ENCODE measurements at regions of chr14 and their contacts with region 1.

Region 1: DNA sequence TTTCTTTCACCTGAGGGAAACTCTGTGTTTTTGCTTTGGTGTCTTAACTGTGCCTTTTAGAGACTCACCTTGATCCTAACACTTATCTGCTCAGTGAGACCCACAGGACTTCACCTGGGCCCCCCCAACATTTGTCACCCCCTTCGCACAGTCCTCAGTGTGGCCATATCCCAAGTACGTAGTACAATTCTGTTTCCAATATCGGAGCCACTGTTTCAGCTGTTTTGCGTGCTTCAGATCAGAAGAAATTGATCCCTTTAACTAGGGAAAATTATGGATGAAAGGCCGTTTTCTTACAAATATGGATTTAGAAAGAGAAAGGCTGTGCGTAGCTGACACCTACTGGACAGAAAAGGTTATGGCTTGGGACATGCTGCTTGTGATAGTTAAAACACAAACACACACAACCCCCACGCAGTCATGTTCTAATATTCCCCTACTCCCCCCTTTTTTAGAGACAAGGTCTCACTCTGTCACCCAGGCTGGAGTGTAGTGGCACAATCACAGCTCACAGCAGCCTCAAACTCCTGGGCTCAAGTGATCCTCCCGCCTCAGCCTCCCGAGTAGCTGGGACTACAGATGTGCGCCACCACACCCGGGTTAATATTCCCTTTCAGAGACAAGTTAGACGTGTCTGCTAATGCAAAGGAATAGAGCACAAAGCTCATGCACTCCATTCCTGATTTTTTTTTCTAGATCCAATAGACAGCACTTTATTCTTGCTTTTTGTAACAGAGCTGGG is 3.6 kb upstream of the SLC7A8 start:
- DNase-seq: peak; percentile 51
- H3K4me3 Mint-ChIP-seq: no peak overlapping the region
- H3K27ac Mint-ChIP-seq: no peak overlapping the region
- H3K4me1 Mint-ChIP-seq: no peaks in the 10 kb centered on the region
- H3K27me3 Mint-ChIP-seq: peaks cover 14% of the 10 kb centered on the region

Region 2: GRCh38 chr14:23130871-23131270 is 56.2 kb before region 1 on chr14:
- CTCF ChIA-PET with region 1: interaction called, 264 read pairs
- DNase-seq: no peak
- H3K4me3 Mint-ChIP-seq: no peak overlapping the region
- H3K27ac Mint-ChIP-seq: no peak overlapping the region
- H3K4me1 Mint-ChIP-seq: peaks cover 9% of the 10 kb centered on the region
- H3K27me3 Mint-ChIP-seq: peaks cover 18% of the 10 kb centered on the region

Region 3: GRCh38 chr14:23174276-23175184 is 12.6 kb before region 1 on chr14:
- CTCF ChIA-PET with region 1: interaction called, 15 read pairs
- DNase-seq: no peak
- H3K4me3 Mint-ChIP-seq: no peak overlapping the region
- H3K27ac Mint-ChIP-seq: no peak overlapping the region
- H3K4me1 Mint-ChIP-seq: peaks cover 16% of the 10 kb centered on the region
- H3K27me3 Mint-ChIP-seq: peaks cover 28% of the 10 kb centered on the region

Region 4: GRCh38 chr14:23398348-23398747 is 211.3 kb after region 1 on chr14:
- CTCF ChIA-PET with region 1: no interaction called
- DNase-seq: no peak
- H3K4me3 Mint-ChIP-seq: no peak overlapping the region
- H3K27ac Mint-ChIP-seq: no peak overlapping the region
- H3K4me1 Mint-ChIP-seq: no peaks in the 10 kb centered on the region
- H3K27me3 Mint-ChIP-seq: peaks cover 35% of the 10 kb centered on the region

Region 5: DNA sequence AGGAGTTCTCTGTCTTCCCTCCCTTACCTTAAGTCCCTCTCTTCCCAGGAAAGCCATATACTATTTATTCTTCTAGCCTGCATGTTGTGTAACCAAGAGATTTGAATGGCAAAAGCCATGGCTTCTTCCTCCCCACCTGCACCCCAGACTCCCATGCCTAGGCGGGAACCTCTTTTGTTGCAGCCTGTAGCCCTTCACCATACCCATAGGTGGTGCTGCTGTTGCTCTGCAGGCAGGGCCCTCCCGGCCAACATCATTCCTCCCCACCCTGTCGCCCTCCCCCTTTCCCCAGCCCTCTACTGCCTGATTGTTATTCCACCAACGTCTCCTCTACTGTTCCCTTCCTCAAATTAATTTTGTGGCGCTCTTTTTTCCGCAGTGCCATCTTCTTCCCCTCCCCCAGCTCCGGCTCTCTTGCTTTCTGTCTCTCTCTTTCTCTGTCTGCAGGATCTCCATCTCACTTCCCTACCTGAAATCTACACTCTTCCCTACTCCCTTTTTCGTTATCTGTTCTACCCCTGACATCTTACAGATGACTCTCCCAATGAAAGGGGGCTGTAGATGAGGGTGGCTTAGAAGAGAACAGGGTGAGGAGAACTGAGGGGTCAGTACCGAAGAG is 296.3 kb after region 1 on chr14:
- CTCF ChIA-PET with region 1: no interaction called
- DNase-seq: peak; percentile 27
- H3K4me3 Mint-ChIP-seq: no peak overlapping the region
- H3K27ac Mint-ChIP-seq: no peak overlapping the region
- H3K4me1 Mint-ChIP-seq: peaks cover 1% of the 10 kb centered on the region
- H3K27me3 Mint-ChIP-seq: no peaks in the 10 kb centered on the region

Region 6: GRCh38 chr14:23776288-23776687 is 589.2 kb after region 1 on chr14:
- CTCF ChIA-PET with region 1: no interaction called
- DNase-seq: no peak
- H3K4me3 Mint-ChIP-seq: no peak overlapping the region
- H3K27ac Mint-ChIP-seq: no peak overlapping the region
- H3K4me1 Mint-ChIP-seq: no peaks in the 10 kb centered on the region
- H3K27me3 Mint-ChIP-seq: peaks cover 5% of the 10 kb centered on the region